Panc1 (cell line): ENCODE measurements at regions of chr12 and their contacts with region 1.

Region 1: DNA sequence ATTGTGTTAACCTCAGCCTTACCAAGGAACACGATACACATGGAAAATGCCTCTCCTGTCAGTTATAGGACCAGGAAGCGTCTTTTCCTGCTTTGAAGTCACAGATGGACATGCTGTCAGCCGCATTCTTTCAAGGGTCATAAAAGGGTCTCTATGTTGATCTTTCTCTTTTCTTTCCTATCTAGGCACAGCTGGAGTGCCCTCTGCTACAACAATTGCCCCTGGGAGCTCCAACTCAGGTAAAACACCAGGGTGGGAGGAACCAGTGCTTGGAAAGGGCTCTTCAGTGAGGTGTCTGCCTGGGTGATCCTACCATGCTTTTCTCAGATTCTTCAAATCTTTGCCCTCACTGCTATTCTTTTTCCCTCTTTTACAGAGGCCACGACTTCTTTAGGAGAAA is 157.4 kb upstream of the CNTN1 start:
- DNase-seq: no peak
- ATAC-seq: no peak
- H3K4me3 ChIP-seq: no peak overlapping the region
- H3K27ac ChIP-seq: no peak overlapping the region
- H3K4me1 ChIP-seq: no peaks in the 10 kb centered on the region
- H3K27me3 ChIP-seq: no peaks in the 10 kb centered on the region
- CTCF ChIP-seq: no peak

Region 2: GRCh38 chr12:40375076-40375475 is 159.8 kb before region 1 on chr12:
- CTCF ChIA-PET with region 1: no interaction called
- POLR2A ChIA-PET with region 1: interaction called, 11 read pairs
- in situ Hi-C with region 1: no loop called
- intact Hi-C with region 1: no loop called
- DNase-seq: peak; percentile 8
- ATAC-seq: no peak
- H3K4me3 ChIP-seq: no peak overlapping the region
- H3K27ac ChIP-seq: no peak overlapping the region
- H3K4me1 ChIP-seq: no peaks in the 10 kb centered on the region
- H3K27me3 ChIP-seq: no peaks in the 10 kb centered on the region
- CTCF ChIP-seq: peak; percentile 22; the same call in 1 of the 2 replicates

Region 3: DNA sequence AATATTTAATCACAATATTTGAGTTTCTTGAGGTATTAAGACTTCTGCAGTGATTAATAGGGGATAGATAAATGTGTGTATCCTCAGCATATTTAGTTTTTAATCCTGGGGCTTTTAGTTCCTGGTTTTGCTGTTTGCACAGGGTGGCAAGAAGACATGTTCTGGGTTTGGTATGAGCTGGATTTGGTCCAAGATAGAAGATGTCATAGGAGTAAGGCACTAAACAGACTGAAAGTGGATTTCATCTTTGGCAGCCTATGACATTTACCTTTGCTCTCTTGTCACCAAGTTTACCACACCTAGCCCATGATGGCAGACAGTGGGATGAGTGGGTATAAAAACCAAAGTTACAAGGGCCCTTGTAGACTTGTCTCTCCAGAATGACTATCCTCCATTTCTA is 141.8 kb before region 1 on chr12:
- CTCF ChIA-PET with region 1: no interaction called
- POLR2A ChIA-PET with region 1: no interaction called
- in situ Hi-C with region 1: no loop called
- intact Hi-C with region 1: no loop called
- DNase-seq: no peak
- ATAC-seq: no peak
- H3K4me3 ChIP-seq: no peak overlapping the region
- H3K27ac ChIP-seq: no peak overlapping the region
- H3K4me1 ChIP-seq: no peaks in the 10 kb centered on the region
- H3K27me3 ChIP-seq: no peaks in the 10 kb centered on the region
- CTCF ChIP-seq: no peak

Region 4: DNA sequence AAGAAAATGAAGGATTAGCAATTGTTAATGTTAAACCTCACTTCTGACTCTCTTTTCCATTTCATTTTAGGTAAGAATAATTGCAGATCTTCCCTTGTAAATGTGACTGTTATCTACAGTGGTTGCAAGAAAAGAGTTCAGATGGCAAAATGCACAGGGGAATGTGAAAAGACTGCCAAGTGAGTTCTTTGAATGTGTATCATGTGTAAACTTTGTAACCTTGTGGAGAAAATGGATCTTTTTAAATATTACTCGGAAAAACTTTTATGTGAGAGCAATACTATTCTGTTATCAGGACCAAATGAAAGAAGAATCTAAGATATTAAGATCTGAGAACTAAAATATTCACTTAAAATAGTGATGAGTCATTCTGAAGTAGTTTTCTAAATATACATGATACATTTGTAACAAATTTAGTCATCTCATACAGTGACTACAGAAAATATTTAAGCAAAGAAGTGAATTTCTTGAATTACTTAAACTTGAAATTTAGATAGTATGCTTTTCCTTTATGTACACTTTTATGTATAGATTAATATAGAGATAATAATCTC is 34.9 kb after region 1 on chr12:
- CTCF ChIA-PET with region 1: no interaction called
- POLR2A ChIA-PET with region 1: no interaction called
- in situ Hi-C with region 1: no loop called
- intact Hi-C with region 1: no loop called
- DNase-seq: no peak
- ATAC-seq: no peak
- H3K4me3 ChIP-seq: no peak overlapping the region
- H3K27ac ChIP-seq: no peak overlapping the region
- H3K4me1 ChIP-seq: no peaks in the 10 kb centered on the region
- H3K27me3 ChIP-seq: no peaks in the 10 kb centered on the region
- CTCF ChIP-seq: no peak